Heart left ventricle (tissue), 16 donors: ENCODE measurements at regions of chr21 and their contacts with region 1.

Region 1: GRCh38 chr21:16454399-16454798 is 724.6 kb downstream of the USP25 start:
- DNase-seq: no peak
- ATAC-seq: peak in 3 of 4 donors; percentile 64 to 72 (median 65)
- H3K4me3 ChIP-seq: no peak overlapping the region
- H3K27ac ChIP-seq: no peak overlapping the region
- H3K4me1 ChIP-seq: peaks cover 0 to 73% (median 33%) of the 10 kb centered on the region in 12 donors
- H3K27me3 ChIP-seq: no peaks in the 10 kb centered on the region
- CTCF ChIP-seq: peak in 10 of 12 donors; percentile 14 to 53 (median 44)
- POLR2A ChIP-seq: no peak

Region 2: GRCh38 chr21:16522490-16522889 is 68.1 kb after region 1 on chr21:
- intact Hi-C with region 1: no loop called
- DNase-seq: no peak
- ATAC-seq: no peak
- H3K4me3 ChIP-seq: no peak overlapping the region
- H3K27ac ChIP-seq: no peak overlapping the region
- H3K4me1 ChIP-seq: peaks cover 0 to 22% (median 0%) of the 10 kb centered on the region in 12 donors
- H3K27me3 ChIP-seq: no peaks in the 10 kb centered on the region
- CTCF ChIP-seq: no peak
- POLR2A ChIP-seq: no peak

Region 3: DNA sequence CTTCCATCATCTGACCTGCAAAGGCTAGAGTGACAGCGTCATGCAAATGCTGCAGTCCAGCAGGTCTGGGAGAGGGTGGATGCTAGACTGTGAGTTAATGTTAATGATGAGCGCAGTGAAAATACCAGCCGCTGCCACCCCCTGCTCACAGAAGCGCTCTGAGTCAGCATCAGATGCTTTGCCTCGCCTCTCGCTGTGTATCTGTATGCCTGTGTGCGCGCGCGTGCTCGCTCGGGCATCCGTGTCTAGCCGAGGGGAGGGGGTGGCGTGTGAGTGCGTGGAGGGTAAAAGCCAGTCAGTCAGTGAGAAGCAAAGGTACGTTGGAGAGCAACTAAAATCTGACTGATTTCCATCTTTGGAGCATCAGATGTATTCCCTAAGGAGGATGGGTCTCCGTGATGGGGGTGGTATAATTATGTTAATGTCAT is 134.0 kb after region 1 on chr21:
- intact Hi-C with region 1: loop called in 1 of 10 experiments (anchors 10 kb)
- DNase-seq: peak; percentile 45 to 74 (median 59)
- ATAC-seq: peak; percentile 79 to 94 (median 90)
- H3K4me3 ChIP-seq: peak overlapping the region in 11 of 12 donors; percentile 16 to 53 (median 45)
- H3K27ac ChIP-seq: peak overlapping the region in 11 of 12 donors; percentile 33 to 76 (median 67)
- H3K4me1 ChIP-seq: peaks cover 0 to 40% (median 19%) of the 10 kb centered on the region in 12 donors
- H3K27me3 ChIP-seq: no peaks in the 10 kb centered on the region
- CTCF ChIP-seq: no peak
- POLR2A ChIP-seq: no peak

Region 4: GRCh38 chr21:16608209-16608830 is 153.9 kb after region 1 on chr21:
- intact Hi-C with region 1: loop called in 2 of 10 experiments (anchors 10 kb)
- DNase-seq: no peak
- ATAC-seq: peak; percentile 39 to 51 (median 45)
- H3K4me3 ChIP-seq: no peak overlapping the region
- H3K27ac ChIP-seq: no peak overlapping the region
- H3K4me1 ChIP-seq: peaks cover 0 to 14% (median 1%) of the 10 kb centered on the region in 12 donors
- H3K27me3 ChIP-seq: no peaks in the 10 kb centered on the region
- CTCF ChIP-seq: peak in 6 of 12 donors; percentile 14 to 49 (median 34)
- POLR2A ChIP-seq: no peak

Region 5: GRCh38 chr21:16619281-16619680 is 164.9 kb after region 1 on chr21:
- intact Hi-C with region 1: loop called in 1 of 10 experiments (anchors 10 kb)
- DNase-seq: no peak
- ATAC-seq: no peak
- H3K4me3 ChIP-seq: no peak overlapping the region
- H3K27ac ChIP-seq: no peak overlapping the region
- H3K4me1 ChIP-seq: peaks cover 0 to 9% (median 0%) of the 10 kb centered on the region in 12 donors
- H3K27me3 ChIP-seq: no peaks in the 10 kb centered on the region
- CTCF ChIP-seq: no peak
- POLR2A ChIP-seq: no peak